K562 (cell line): ENCODE measurements at regions of chr13 and their contacts with region 1.

Region 1: DNA sequence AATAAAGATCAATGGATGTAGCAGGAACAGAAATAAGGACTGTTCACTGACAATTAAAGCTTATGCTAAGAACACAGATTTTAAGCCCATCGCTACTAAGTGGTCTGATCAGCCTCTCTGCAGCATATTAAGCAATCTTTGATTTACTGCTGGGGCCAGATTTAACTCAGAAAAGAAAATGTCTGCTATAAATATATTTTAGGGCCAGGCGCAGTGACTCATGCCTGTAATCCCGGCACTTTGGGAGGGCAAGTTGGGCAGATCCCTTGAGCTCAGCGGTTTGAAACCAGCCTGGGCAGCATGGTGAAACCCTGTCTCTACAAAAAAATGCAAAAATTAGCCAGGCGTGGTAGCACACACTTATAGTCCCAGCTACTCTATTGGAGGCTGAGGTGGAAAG is 43.0 kb downstream of the METTL21C start:
- DNase-seq: no peak
- ATAC-seq: no peak
- H3K4me3 ChIP-seq: no peak overlapping the region
- H3K27ac ChIP-seq: no peak overlapping the region
- H3K4me1 ChIP-seq: no peaks in the 10 kb centered on the region
- H3K27me3 ChIP-seq: no peaks in the 10 kb centered on the region
- CTCF ChIP-seq: no peak
- EP300 ChIP-seq: no peak
- POLR2A ChIP-seq: no peak
- RAD21 ChIP-seq: no peak

Region 2: GRCh38 chr13:102394158-102395053 is 257.5 kb before region 1 on chr13:
- CTCF ChIA-PET with region 1: no interaction called
- POLR2A ChIA-PET with region 1: no interaction called
- in situ Hi-C with region 1: no loop called
- intact Hi-C with region 1: no loop called
- DNase-seq: peak; percentile 72 to 83 (median 74)
- ATAC-seq: peak; percentile 88
- H3K4me3 ChIP-seq: peak overlapping the region; percentile 51
- H3K27ac ChIP-seq: no peak overlapping the region
- H3K4me1 ChIP-seq: peaks cover 0 to 11% of the 10 kb centered on the region in 2 experiments; a peak in 2 of 5 replicates
- H3K27me3 ChIP-seq: no peaks in the 10 kb centered on the region
- CTCF ChIP-seq: peak in 1 of 3 experiments; percentile 23; a peak in 1 of 6 replicates
- EP300 ChIP-seq: no peak
- POLR2A ChIP-seq: no peak
- RAD21 ChIP-seq: no peak

Region 3: DNA sequence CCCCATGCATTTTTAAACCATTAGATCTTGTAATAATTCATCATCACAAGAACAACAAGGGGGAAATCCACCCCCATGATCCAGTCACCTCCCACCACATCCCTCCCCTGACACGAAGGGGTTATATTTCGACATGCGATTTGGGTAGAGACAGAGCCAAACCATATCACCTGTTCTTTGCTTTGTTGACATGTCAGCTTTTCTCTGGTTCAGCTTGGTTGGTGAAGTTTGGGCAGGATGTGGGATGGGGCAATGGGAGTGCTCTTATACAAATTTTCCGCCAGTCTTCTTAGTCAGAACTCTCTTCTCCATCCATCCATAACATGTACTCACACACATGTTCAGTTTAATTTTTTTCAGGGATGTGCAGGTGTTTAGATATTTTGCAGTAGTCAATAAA is 42.2 kb before region 1 on chr13:
- CTCF ChIA-PET with region 1: no interaction called
- POLR2A ChIA-PET with region 1: no interaction called
- in situ Hi-C with region 1: no loop called
- intact Hi-C with region 1: loop called (anchors 5 kb)
- DNase-seq: no peak
- ATAC-seq: no peak
- H3K4me3 ChIP-seq: no peak overlapping the region
- H3K27ac ChIP-seq: no peak overlapping the region
- H3K4me1 ChIP-seq: peaks cover 4 to 23% of the 10 kb centered on the region in 2 experiments
- H3K27me3 ChIP-seq: no peaks in the 10 kb centered on the region
- CTCF ChIP-seq: no peak
- EP300 ChIP-seq: no peak
- POLR2A ChIP-seq: no peak
- RAD21 ChIP-seq: no peak